Tibial artery (tissue), 4 donors: ENCODE measurements at regions of chr2 and their contacts with region 1.

Region 1: GRCh38 chr2:29196792-29197788 is 81.9 kb downstream of the CLIP4 start:
- DNase-seq: peak in 1 of 2 donors; percentile 51
- H3K4me3 ChIP-seq: no peak overlapping the region
- H3K27ac ChIP-seq: no peak overlapping the region
- H3K4me1 ChIP-seq: no peaks in the 10 kb centered on the region
- H3K27me3 ChIP-seq: no peaks in the 10 kb centered on the region
- CTCF ChIP-seq: peak; percentile 77 to 81

Region 2: GRCh38 chr2:28958689-28959088 is 238.4 kb before region 1 on chr2:
- intact Hi-C with region 1: loop called (anchors 2 kb)
- DNase-seq: peak in 1 of 2 donors; percentile 48
- H3K4me3 ChIP-seq: no peak overlapping the region
- H3K27ac ChIP-seq: no peak overlapping the region
- H3K4me1 ChIP-seq: peaks cover 0 to 11% (median 0%) of the 10 kb centered on the region in 4 donors
- H3K27me3 ChIP-seq: no peaks in the 10 kb centered on the region
- CTCF ChIP-seq: peak; percentile 76 to 81

Region 3: GRCh38 chr2:29097569-29097968 is 99.5 kb before region 1 on chr2:
- intact Hi-C with region 1: no loop called
- DNase-seq: no peak
- H3K4me3 ChIP-seq: no peak overlapping the region
- H3K27ac ChIP-seq: no peak overlapping the region
- H3K4me1 ChIP-seq: no peaks in the 10 kb centered on the region
- H3K27me3 ChIP-seq: no peaks in the 10 kb centered on the region
- CTCF ChIP-seq: no peak

Region 4: DNA sequence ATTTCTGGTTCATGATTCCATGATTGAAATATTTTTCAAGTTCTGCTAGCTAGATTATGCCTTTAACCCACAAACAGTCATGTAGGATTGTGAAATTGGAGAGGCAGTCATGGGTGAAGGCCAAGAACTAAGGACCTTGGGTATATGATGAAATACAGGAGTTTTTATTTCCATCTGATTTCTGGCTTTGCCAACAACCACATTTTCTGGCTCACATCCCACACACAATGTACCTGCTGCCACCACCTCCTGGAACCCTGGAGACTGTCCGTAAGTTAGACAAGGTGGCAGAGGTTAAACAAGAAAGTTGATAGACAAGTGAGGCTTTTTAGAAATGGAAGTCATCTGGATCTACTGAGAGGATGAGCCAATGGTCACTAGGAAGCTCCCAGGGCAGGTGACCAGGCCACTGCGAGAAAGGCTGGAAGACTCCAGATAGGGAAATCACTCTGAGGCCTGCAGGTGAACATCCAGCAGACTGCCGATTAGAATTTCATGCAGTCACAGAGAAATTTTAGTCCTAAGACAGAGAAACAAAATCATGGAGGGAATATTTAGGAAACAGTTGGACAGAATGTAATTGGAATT is 322.3 kb after region 1 on chr2:
- intact Hi-C with region 1: no loop called
- DNase-seq: no peak
- H3K4me3 ChIP-seq: no peak overlapping the region
- H3K27ac ChIP-seq: no peak overlapping the region
- H3K4me1 ChIP-seq: no peaks in the 10 kb centered on the region
- H3K27me3 ChIP-seq: peaks cover 0 to 5% of the 10 kb centered on the region in 2 donors
- CTCF ChIP-seq: no peak